GM13976 (cell line): ENCODE measurements at regions of chr12 and their contacts with region 1.

Region 1: GRCh38 chr12:32659908-32660440 is 19.1 kb upstream of the DNM1L start:
- DNase-seq: no peak
- CTCF ChIP-seq: no peak

Region 2: GRCh38 chr12:32365473-32366064 is 294.4 kb before region 1 on chr12:
- in situ Hi-C with region 1: loop called (anchors 10 kb)
- DNase-seq: peak; percentile 58
- CTCF ChIP-seq: peak; percentile 50